HepG2 (cell line): ENCODE measurements at regions of chr12 and their contacts with region 1.

Region 1: GRCh38 chr12:59808317-59808910 is 212.6 kb downstream of the SLC16A7 start:
- DNase-seq: peak; percentile 11
- ATAC-seq: peak; percentile 81
- H3K4me3 ChIP-seq: no peak overlapping the region
- H3K27ac ChIP-seq: no peak overlapping the region
- H3K4me1 ChIP-seq: no peaks in the 10 kb centered on the region
- H3K27me3 ChIP-seq: no peaks in the 10 kb centered on the region
- CTCF ChIP-seq: peak; percentile 48
- EP300 ChIP-seq: no peak
- POLR2A ChIP-seq: no peak
- RAD21 ChIP-seq: no peak

Region 2: GRCh38 chr12:59403259-59403932 is 405.0 kb before region 1 on chr12:
- CTCF ChIA-PET with region 1: interaction called, 3 read pairs
- POLR2A ChIA-PET with region 1: no interaction called
- in situ Hi-C with region 1: loop called (anchors 25 kb)
- intact Hi-C with region 1: loop called (anchors 1 kb)
- DNase-seq: peak; percentile 44
- ATAC-seq: peak; percentile 87
- H3K4me3 ChIP-seq: no peak overlapping the region
- H3K27ac ChIP-seq: no peak overlapping the region
- H3K4me1 ChIP-seq: no peaks in the 10 kb centered on the region
- H3K27me3 ChIP-seq: no peaks in the 10 kb centered on the region
- CTCF ChIP-seq: peak; percentile 71
- EP300 ChIP-seq: no peak
- POLR2A ChIP-seq: no peak
- RAD21 ChIP-seq: no peak

Region 3: GRCh38 chr12:59595883-59596540 is 212.4 kb before region 1 on chr12 and contains the start of gene SLC16A7:
- CTCF ChIA-PET with region 1: no interaction called
- POLR2A ChIA-PET with region 1: no interaction called
- in situ Hi-C with region 1: no loop called
- intact Hi-C with region 1: loop called (anchors 10 kb)
- DNase-seq: peak; percentile 39
- ATAC-seq: peak; percentile 86
- H3K4me3 ChIP-seq: peak within 1 kb of the TSS; percentile 38 to 71 (median 69)
- H3K27ac ChIP-seq: peak within 1 kb of the TSS; percentile 24
- H3K4me1 ChIP-seq: peaks cover 8% of the 10 kb centered on the region; the same call in 1 of the 2 replicates
- H3K27me3 ChIP-seq: peaks cover 0 to 11% of the 10 kb centered on the region in 2 experiments; a peak in 1 of 5 replicates
- CTCF ChIP-seq: no peak
- EP300 ChIP-seq: no peak
- POLR2A ChIP-seq: no peak
- RAD21 ChIP-seq: no peak
- total RNA-seq, gene SLC16A7: 1.3 TPM in 2 replicates

Region 4: GRCh38 chr12:59736822-59737221 is 71.6 kb before region 1 on chr12:
- CTCF ChIA-PET with region 1: no interaction called
- POLR2A ChIA-PET with region 1: no interaction called
- in situ Hi-C with region 1: no loop called
- intact Hi-C with region 1: no loop called
- DNase-seq: no peak
- ATAC-seq: no peak
- H3K4me3 ChIP-seq: no peak overlapping the region
- H3K27ac ChIP-seq: no peak overlapping the region
- H3K4me1 ChIP-seq: no peaks in the 10 kb centered on the region
- H3K27me3 ChIP-seq: no peaks in the 10 kb centered on the region
- CTCF ChIP-seq: no peak
- EP300 ChIP-seq: no peak
- POLR2A ChIP-seq: no peak
- RAD21 ChIP-seq: no peak